ENCODE measurements at regions of chr18 and their contacts with region 1.

Region 1: DNA sequence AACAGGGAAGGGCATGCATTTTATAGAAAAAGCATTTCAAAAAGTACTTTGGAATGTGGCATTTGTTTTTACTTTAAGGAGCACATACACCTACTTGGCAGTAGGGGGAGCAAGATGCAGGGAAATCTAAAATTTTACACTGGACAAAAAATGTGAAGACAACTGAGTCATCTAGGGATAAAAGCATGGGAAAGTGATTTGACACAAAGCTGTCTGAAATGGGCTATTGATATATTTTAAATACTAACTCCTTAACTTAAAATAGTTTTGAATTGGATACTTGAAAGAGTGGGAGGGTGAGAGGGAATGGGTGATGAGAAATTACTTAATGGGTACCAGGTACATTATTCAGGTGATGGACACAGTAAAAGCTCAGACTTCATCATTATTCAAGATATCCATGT is 15.8 kb downstream of the TMEM200C start:
- DNase-seq: no peak
- CTCF ChIP-seq: peak; percentile 63

Region 2: DNA sequence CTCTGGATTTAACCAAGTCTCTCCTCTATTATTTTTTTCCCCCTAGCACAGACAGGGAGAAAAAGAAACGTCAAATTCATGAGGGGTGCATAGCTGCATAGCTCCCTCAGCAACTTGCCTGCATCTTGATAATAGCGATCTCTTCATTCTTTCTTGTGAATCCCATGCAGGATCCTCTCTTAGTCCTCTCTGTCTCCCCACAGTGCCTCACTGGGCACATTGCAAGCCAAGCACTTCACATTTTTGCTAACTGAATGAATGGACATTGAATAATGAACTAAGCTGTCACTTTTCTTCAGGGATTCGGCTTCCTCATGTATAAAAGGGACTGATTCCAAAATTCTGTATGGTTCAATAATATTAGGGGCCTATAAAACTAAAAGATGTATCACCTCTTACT is 332.8 kb before region 1 on chr18:
- in situ Hi-C with region 1: no loop called
- DNase-seq: no peak
- CTCF ChIP-seq: no peak

Region 3: GRCh38 chr18:5620289-5620688 is 259.2 kb before region 1 on chr18:
- in situ Hi-C with region 1: no loop called
- DNase-seq: no peak
- CTCF ChIP-seq: no peak

Region 4: DNA sequence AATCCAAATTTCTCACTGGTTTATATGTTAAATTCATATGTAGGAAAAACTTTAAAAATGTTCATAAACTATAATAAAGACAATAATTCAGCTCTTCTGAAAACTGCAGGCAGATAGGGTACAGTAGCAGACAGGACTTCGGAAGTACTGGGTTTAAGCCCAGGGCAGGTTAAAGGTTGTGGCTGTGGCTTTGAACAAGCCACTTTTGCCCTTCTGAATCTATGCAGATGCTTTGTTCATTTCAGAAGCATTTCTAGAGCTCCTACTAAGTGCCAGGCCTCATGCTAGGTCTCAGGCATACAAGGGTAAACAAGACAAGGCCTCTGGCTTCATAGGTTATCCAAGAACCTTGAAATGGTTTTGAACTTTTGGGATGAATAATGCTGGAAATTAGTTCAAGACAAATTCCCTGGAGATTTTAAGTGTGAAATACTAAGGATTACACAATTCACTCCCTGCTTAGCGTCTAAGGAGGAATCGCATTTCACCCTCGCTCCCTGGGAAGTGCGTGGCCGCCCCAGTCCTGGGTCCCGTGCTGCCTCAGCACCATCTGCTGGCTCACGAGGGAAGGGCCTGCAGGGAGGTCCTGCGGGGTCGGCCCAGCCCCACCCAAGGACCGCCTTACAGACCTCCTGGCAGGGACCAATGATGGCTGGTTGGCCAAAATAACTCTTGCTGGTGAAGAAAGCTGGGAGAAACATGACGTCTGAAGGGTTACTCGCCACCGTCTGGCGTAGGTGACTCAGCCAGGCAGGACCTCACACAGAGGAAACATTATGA is 602.9 kb after region 1 on chr18:
- in situ Hi-C with region 1: loop called (anchors 10 kb)
- DNase-seq: peak; percentile 74
- CTCF ChIP-seq: peak; percentile 78

Region 5: DNA sequence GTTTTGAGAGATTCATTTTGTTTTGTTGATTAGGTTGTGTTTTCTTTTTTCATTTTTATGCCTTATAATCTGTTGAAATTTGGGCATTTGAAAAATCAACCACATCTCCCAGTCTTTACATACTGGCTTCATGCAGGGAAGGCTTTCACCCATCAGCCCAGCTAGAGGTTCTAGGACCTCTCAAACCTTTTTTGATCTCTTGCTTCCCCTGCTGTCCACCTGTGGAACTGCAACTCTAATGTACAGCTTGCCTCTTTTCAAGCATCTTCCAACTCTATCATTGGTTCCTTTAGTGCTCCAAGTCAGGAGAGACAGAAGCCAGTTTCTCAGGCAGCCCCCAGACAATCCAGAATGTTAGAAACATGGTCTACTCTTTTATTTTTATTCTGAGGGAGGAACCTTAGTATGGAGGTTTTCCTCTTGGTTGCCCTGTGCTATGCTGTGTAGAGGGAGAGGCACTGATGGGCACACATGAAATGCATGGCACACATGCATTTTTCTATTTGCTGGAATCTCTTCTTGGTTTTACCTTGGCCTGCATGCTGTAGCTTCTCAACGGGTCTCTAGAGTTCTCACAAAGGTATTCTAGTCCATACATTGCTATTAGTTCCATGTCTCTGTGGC is 642.4 kb after region 1 on chr18:
- in situ Hi-C with region 1: loop called (anchors 10 kb)
- DNase-seq: peak; percentile 44
- CTCF ChIP-seq: peak; percentile 78